ENCODE measurements at regions of chr6 and their contacts with region 1.

Region 1: DNA sequence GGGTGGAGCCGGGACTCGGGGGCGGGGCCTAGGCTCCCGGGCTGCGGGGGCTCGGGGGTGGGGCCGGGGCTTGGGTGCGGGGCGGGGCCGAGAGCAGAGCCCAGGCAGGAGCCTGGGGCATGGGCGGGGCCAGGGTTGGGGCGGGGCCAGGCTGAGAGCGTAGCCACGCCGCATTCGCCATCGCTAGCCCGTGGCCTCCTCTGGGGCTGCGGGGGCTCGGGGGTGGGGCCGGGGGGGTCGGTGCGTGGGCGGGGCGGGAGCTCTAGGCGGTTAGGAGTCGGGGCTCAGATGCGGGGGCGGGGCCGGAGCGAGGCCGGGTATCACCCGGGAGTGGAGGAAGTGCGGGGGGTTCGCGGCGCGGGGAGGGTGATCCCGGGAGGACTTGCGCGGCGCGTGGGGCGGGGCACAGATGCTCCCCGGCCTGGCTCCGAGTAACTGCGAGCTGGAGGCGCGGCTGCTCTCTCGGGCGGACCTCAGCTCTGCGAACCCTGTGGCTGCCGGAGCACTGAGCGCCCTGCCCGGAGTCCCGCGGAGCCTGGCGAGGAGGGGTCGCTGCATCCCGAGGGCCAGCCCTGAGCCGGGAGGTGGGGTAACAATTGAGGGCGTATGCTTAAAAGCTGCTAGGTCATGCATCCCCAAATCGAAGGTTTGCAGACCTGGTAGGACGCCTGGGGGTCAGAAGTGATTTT is 434 bp upstream of the ECI2 start:
- DNase-seq: peak; percentile 92
- H3K4me3 Mint-ChIP-seq: peak overlapping the region; percentile 81
- H3K27ac Mint-ChIP-seq: peak overlapping the region; percentile 65
- H3K4me1 Mint-ChIP-seq: peaks cover 40% of the 10 kb centered on the region
- H3K27me3 Mint-ChIP-seq: no peaks in the 10 kb centered on the region

Region 2: GRCh38 chr6:2862712-2863181 is 1273.1 kb before region 1 on chr6:
- CTCF ChIA-PET with region 1: no interaction called
- intact Hi-C with region 1: loop called (anchors 5 kb)
- DNase-seq: peak; percentile 73
- H3K4me3 Mint-ChIP-seq: peak overlapping the region; percentile 66
- H3K27ac Mint-ChIP-seq: peak overlapping the region; percentile 96
- H3K4me1 Mint-ChIP-seq: peaks cover 66% of the 10 kb centered on the region
- H3K27me3 Mint-ChIP-seq: no peaks in the 10 kb centered on the region

Region 3: GRCh38 chr6:3751730-3752542 is 383.9 kb before region 1 on chr6:
- CTCF ChIA-PET with region 1: no interaction called
- intact Hi-C with region 1: loop called (anchors 1 kb)
- DNase-seq: peak; percentile 76
- H3K4me3 Mint-ChIP-seq: peak overlapping the region; percentile 43
- H3K27ac Mint-ChIP-seq: no peak overlapping the region
- H3K4me1 Mint-ChIP-seq: no peaks in the 10 kb centered on the region
- H3K27me3 Mint-ChIP-seq: peaks cover 33% of the 10 kb centered on the region

Region 4: GRCh38 chr6:4055420-4056041 is 80.3 kb before region 1 on chr6:
- CTCF ChIA-PET with region 1: interaction called, 4 read pairs
- intact Hi-C with region 1: loop called (anchors 1 kb)
- DNase-seq: peak; percentile 23
- H3K4me3 Mint-ChIP-seq: no peak overlapping the region
- H3K27ac Mint-ChIP-seq: peak overlapping the region; percentile 50
- H3K4me1 Mint-ChIP-seq: peaks cover 21% of the 10 kb centered on the region
- H3K27me3 Mint-ChIP-seq: no peaks in the 10 kb centered on the region

Region 5: GRCh38 chr6:4155848-4156466 is 20.1 kb after region 1 on chr6:
- CTCF ChIA-PET with region 1: interaction called, 7 read pairs
- intact Hi-C with region 1: loop called (anchors 1 kb)
- DNase-seq: peak; percentile 92
- H3K4me3 Mint-ChIP-seq: no peak overlapping the region
- H3K27ac Mint-ChIP-seq: no peak overlapping the region
- H3K4me1 Mint-ChIP-seq: peaks cover 6% of the 10 kb centered on the region
- H3K27me3 Mint-ChIP-seq: peaks cover 3% of the 10 kb centered on the region

Region 6: GRCh38 chr6:4936681-4937041 is 800.9 kb after region 1 on chr6:
- CTCF ChIA-PET with region 1: no interaction called
- intact Hi-C with region 1: loop called (anchors 10 kb)
- DNase-seq: peak; percentile 23
- H3K4me3 Mint-ChIP-seq: no peak overlapping the region
- H3K27ac Mint-ChIP-seq: no peak overlapping the region
- H3K4me1 Mint-ChIP-seq: peaks cover 32% of the 10 kb centered on the region
- H3K27me3 Mint-ChIP-seq: no peaks in the 10 kb centered on the region

Region 7: GRCh38 chr6:5003604-5004372 is 868.0 kb after region 1 on chr6 and contains the start of gene RPP40:
- CTCF ChIA-PET with region 1: no interaction called
- intact Hi-C with region 1: loop called (anchors 5 kb)
- DNase-seq: peak; percentile 98
- H3K4me3 Mint-ChIP-seq: peak within 1 kb of the TSS; percentile 90
- H3K27ac Mint-ChIP-seq: peak within 1 kb of the TSS; percentile 91
- H3K4me1 Mint-ChIP-seq: peaks cover 11% of the 10 kb centered on the region
- H3K27me3 Mint-ChIP-seq: no peaks in the 10 kb centered on the region
- total RNA-seq, gene RPP40: 8.2 to 9.8 TPM